Right ventricle myocardium inferior (tissue), 1 donor: ENCODE measurements at regions of chr17 and their contacts with region 1.

Region 1: GRCh38 chr17:67717624-67718329 is at the start of gene NOL11:
- DNase-seq: peak; percentile 99
- ATAC-seq: peak; percentile 99
- total RNA-seq, gene NOL11: 25.0 TPM

Region 2: GRCh38 chr17:67779098-67779672 is 61.4 kb after region 1 on chr17:
- intact Hi-C with region 1: loop called (anchors 2 kb)
- DNase-seq: peak; percentile 72
- ATAC-seq: peak; percentile 89

Region 3: DNA sequence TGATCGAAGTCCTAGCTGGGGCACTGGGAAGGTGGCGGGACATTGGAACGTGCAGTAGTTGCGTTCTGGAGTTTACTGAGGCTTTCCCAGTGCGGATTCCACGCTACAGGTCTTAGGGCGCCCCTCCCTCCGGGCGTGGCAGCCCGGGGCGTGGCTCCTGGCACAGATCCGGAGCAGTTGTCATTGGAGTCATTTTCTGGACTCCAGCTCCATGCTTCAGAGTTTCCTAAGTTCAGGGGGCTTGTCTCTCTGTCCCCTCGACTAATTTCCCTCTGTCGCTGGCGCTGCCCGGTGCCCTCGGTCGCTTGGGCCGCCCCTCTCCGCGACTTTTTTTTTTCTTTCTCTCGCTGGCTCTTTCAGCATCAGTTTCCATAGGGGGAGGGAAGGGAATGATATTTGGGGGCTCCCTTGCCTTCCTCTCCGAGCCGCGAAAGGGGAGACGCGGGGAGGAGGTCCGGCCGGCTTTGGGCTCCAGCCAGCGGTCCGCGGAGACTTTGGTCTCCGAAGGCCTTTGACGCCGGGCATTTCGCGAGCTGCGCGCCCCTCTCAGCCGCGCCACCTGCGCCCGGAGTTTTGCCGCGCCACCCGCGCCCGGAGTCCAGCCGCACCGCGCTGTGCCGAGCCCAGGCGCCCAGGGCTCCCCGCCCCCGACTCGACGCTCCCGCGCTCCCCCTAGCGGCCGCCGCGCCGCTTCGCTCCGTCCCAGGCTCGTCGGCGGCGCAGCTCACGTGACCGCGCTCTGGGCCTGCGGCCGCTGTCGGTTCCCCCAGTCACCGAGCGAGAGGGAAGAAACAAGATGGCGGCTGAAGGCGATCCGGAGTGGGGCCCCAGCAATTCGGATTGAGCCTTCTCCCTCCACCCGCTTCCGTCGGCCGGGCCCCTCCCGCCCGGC is 107.2 kb after region 1 on chr17 and contains the start of gene BPTF:
- intact Hi-C with region 1: loop called (anchors 5 kb)
- DNase-seq: peak; percentile 97
- ATAC-seq: peak; percentile 98
- total RNA-seq, gene BPTF: 72.5 TPM